Mammary epithelial cell (primary cell): ENCODE measurements at regions of chr17 and their contacts with region 1.

Region 1: GRCh38 chr17:63478791-63479494 is 2.1 kb downstream of the ACE start:
- DNase-seq: peak; percentile 81
- H3K4me3 ChIP-seq: no peak overlapping the region
- H3K27ac ChIP-seq: no peak overlapping the region
- H3K4me1 ChIP-seq: peaks cover 17% of the 10 kb centered on the region
- H3K27me3 ChIP-seq: peaks cover 5% of the 10 kb centered on the region
- CTCF ChIP-seq: peak; percentile 90 to 98

Region 2: DNA sequence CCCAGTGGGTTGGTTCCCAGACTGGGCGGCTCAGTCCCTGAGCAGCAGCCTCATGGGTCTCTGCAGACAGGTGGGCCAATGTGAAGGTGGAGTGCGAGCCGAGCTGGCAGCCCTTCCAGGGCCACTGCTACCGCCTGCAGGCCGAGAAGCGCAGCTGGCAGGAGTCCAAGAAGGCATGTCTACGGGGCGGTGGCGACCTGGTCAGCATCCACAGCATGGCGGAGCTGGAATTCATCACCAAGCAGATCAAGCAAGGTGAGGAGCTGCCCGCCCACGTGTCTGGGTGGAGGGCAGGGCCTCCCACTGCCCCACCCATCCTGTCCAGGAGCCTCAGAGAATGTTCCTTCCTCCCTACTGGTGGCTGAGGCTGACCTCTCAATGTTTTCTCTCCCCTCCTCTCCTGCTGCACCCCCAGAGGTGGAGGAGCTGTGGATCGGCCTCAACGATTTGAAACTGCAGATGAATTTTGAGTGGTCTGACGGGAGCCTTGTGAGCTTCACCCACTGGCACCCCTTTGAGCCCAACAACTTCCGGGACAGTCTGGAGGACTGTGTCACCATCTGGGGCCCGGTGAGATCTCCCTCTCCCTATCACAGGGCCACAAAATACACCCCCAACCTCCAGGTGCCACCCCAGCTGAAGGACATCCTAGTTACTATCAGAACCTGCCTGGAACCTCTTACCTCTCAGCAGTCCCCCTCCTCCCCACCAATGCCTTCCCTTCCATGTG is 807.2 kb before region 1 on chr17:
- CTCF ChIA-PET with region 1: no interaction called
- dilution Hi-C with region 1: no loop called
- in situ Hi-C with region 1: no loop called
- intact Hi-C with region 1: loop called (anchors 1 kb)
- DNase-seq: peak; percentile 97
- H3K4me3 ChIP-seq: peak overlapping the region in 2 of 3 experiments; percentile 28 to 32
- H3K27ac ChIP-seq: peak overlapping the region; percentile 63
- H3K4me1 ChIP-seq: peaks cover 56% of the 10 kb centered on the region
- H3K27me3 ChIP-seq: no peaks in the 10 kb centered on the region
- CTCF ChIP-seq: peak; percentile 22 to 54

Region 3: GRCh38 chr17:63419949-63420867 is 58.7 kb before region 1 on chr17:
- CTCF ChIA-PET with region 1: no interaction called
- dilution Hi-C with region 1: no loop called
- in situ Hi-C with region 1: loop called in 1 of 2 experiments (anchors 5 kb)
- intact Hi-C with region 1: loop called (anchors 1 kb)
- DNase-seq: no peak
- H3K4me3 ChIP-seq: no peak overlapping the region
- H3K27ac ChIP-seq: no peak overlapping the region
- H3K4me1 ChIP-seq: peaks cover 18% of the 10 kb centered on the region
- H3K27me3 ChIP-seq: no peaks in the 10 kb centered on the region
- CTCF ChIP-seq: no peak

Region 4: GRCh38 chr17:63434876-63435684 is 43.9 kb before region 1 on chr17:
- CTCF ChIA-PET with region 1: interaction called, 4 read pairs
- dilution Hi-C with region 1: no loop called
- in situ Hi-C with region 1: no loop called
- intact Hi-C with region 1: loop called (anchors 2 kb)
- DNase-seq: peak; percentile 76
- H3K4me3 ChIP-seq: no peak overlapping the region
- H3K27ac ChIP-seq: no peak overlapping the region
- H3K4me1 ChIP-seq: peaks cover 29% of the 10 kb centered on the region
- H3K27me3 ChIP-seq: no peaks in the 10 kb centered on the region
- CTCF ChIP-seq: peak; percentile 31 to 36

Region 5: DNA sequence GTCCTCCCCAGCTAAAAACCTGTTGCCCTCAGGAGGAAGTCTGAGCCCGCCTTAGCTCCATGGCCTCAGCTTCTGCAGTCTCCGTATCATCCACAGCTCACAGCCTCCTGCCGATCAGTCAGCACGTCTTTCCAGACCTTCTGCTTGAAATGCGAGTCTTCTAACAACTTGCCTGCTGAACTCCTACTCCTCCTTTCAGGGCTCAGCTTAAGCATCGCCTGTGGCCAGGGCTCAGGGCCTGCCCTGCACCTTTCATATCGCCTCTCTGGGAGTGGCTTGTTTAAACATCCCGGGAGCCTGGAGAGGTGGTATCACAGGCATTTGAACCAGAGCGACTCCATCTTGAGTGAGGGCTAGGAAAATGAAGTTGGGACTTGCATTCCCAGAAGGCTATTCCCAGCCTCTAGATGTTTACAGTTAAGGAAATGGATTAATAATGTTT is 19.0 kb before region 1 on chr17:
- CTCF ChIA-PET with region 1: interaction called, 3 read pairs
- dilution Hi-C with region 1: no loop called
- in situ Hi-C with region 1: no loop called
- intact Hi-C with region 1: loop called (anchors 1 kb)
- DNase-seq: no peak
- H3K4me3 ChIP-seq: no peak overlapping the region
- H3K27ac ChIP-seq: no peak overlapping the region
- H3K4me1 ChIP-seq: peaks cover 27% of the 10 kb centered on the region
- H3K27me3 ChIP-seq: no peaks in the 10 kb centered on the region
- CTCF ChIP-seq: no peak

Region 6: GRCh38 chr17:63611354-63611753 is 132.4 kb after region 1 on chr17:
- CTCF ChIA-PET with region 1: no interaction called
- dilution Hi-C with region 1: no loop called
- in situ Hi-C with region 1: no loop called
- intact Hi-C with region 1: loop called (anchors 2 kb)
- DNase-seq: no peak
- H3K4me3 ChIP-seq: no peak overlapping the region
- H3K27ac ChIP-seq: no peak overlapping the region
- H3K4me1 ChIP-seq: no peaks in the 10 kb centered on the region
- H3K27me3 ChIP-seq: no peaks in the 10 kb centered on the region
- CTCF ChIP-seq: no peak

Region 7: GRCh38 chr17:64306850-64307463 is 828.0 kb after region 1 on chr17:
- CTCF ChIA-PET with region 1: no interaction called
- dilution Hi-C with region 1: no loop called
- in situ Hi-C with region 1: no loop called
- intact Hi-C with region 1: no loop called
- DNase-seq: peak; percentile 33
- H3K4me3 ChIP-seq: no peak overlapping the region
- H3K27ac ChIP-seq: no peak overlapping the region
- H3K4me1 ChIP-seq: peaks cover 4% of the 10 kb centered on the region
- H3K27me3 ChIP-seq: no peaks in the 10 kb centered on the region
- CTCF ChIP-seq: peak; percentile 73 to 84